ENCODE measurements at regions of chr11 and their contacts with region 1.

Region 1: GRCh38 chr11:63614136-63614664 is at the start of gene PLAAT3:
- DNase-seq: peak; percentile 87
- total RNA-seq, gene PLAAT3: 109 TPM

Region 2: GRCh38 chr11:63490551-63491239 is 123.5 kb before region 1 on chr11 and contains the start of gene PLAAT5:
- intact Hi-C with region 1: loop called (anchors 5 kb)
- DNase-seq: peak; percentile 75
- total RNA-seq, gene PLAAT5: 0.32 TPM

Region 3: DNA sequence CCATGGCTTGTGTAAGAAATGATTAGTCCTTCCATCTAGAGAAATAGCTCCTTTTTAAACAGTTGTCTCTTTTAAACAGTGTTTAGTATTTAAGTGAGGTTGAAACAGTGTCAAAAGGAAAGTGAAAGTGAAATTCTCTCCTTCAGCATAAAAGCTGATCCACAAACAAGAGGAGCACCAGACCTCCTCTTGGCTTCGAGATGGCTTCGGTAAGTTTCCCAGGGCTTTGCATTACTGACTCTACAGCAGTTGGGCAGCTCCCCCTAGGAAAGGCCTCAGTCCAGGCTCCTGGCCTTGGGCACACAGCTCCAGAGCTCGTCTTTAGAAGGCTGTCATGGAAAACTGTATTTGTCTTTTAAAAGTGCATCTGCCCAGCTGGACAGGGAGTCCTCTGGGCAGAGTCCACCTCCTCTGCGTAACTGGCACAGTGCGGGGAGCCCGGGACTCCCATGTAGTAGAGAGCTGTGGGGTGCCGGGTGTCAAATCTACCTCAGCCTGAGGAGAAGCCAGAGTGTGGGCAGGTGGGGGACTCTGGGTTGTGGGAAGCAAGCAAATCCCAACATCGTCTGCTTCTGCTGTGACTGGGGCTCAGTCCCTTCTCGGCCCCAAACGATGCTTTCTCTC is 77.4 kb before region 1 on chr11 and contains the start of gene PLAAT4:
- intact Hi-C with region 1: loop called (anchors 2 kb)
- DNase-seq: no peak
- total RNA-seq, gene PLAAT4: 6.9 TPM

Region 4: DNA sequence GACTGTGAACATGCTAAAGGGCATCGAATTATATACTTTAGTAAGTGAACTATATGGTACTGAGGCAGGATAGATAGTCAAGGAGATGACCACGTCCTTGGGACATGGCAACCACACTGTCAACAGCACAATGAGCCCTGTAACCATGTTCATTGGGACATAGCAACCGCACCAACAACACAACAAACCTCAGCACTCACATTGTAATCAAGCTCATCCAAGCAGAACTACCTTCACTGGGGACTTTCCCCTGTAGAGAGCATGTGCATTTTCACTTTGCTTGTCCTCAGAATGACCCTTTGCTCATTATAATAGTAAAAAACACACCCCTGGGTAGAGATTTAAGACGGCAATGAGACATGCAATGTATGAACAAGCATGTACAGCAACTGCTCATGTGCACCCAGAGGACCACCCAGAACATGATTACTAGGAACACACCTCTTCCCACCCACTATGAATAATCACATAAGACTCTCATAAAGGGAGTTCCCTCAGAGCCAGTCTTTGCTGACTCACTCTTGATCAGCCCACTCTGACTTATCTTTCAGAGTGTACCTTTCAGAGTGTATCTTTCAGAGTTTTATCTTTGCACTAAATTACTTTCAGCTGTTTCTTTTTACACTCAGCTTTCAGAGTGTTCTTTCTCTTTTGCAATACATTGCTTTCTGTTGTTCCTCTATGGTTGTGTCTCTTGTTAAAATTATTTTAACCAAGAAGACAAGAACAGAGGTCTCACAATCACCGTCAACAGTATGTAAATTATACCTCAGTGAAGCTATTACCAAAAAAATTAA is 47.0 kb before region 1 on chr11:
- intact Hi-C with region 1: loop called (anchors 5 kb)
- DNase-seq: no peak

Region 5: DNA sequence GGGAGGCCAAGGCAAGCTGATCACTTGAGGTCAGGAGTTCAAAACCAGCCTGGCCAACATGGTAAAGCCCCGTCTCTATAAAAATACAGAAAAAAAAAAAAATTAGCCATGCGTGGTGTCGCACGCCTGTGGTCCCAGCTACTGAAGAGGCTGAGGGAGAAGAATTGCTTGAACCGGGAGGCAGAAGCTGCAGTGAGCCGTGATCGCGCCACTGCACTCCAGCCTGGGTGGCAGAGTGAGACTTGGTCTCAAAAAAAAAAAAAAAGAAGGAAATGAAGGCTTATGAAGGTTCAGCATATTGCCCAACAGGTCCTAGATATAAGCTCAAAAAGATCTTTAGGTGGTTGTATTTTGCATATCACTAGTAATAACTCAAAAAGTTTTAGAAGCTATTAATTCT is 46.8 kb after region 1 on chr11:
- intact Hi-C with region 1: no loop called
- DNase-seq: no peak

Region 6: GRCh38 chr11:63671322-63672155 is 57.3 kb after region 1 on chr11 and contains the start of gene ATL3:
- intact Hi-C with region 1: loop called (anchors 5 kb)
- DNase-seq: peak; percentile 99
- total RNA-seq, gene ATL3: 15.1 TPM

Measured in cardiac septum (tissue), 1 donor.